PC-3 (cell line): ENCODE measurements at regions of chr1 and their contacts with region 1.

Region 1: GRCh38 chr1:215606564-215607168 is 39.6 kb downstream of the KCTD3 start:
- DNase-seq: peak; percentile 75
- ATAC-seq: peak; percentile 78
- H3K4me3 ChIP-seq: no peak overlapping the region
- H3K27ac ChIP-seq: no peak overlapping the region
- H3K4me1 ChIP-seq: no peaks in the 10 kb centered on the region
- H3K27me3 ChIP-seq: no peaks in the 10 kb centered on the region
- CTCF ChIP-seq: peak; percentile 95

Region 2: DNA sequence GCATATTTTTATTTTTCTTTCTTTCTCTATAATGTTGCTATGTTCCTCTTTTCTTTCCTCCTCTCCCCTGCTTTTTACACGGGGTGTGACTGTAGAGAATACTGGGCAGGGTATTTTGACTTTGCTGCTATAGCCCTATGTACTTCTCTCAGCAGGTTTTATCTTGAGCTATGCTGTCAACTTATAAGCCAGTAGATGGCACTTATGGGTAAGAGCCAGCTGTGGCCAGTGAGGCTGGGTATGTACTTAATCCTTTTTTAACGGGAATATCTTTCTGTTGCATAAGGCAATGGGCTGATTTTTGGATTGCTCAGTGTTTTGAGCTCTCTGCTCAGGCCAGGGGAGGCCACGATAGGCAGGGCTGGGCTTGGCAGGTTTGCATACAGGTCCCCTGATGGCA is 425.1 kb before region 1 on chr1:
- CTCF ChIA-PET with region 1: interaction called, 3 read pairs
- POLR2A ChIA-PET with region 1: no interaction called
- intact Hi-C with region 1: loop called (anchors 1 kb)
- DNase-seq: peak; percentile 80
- ATAC-seq: peak; percentile 99
- H3K4me3 ChIP-seq: no peak overlapping the region
- H3K27ac ChIP-seq: no peak overlapping the region
- H3K4me1 ChIP-seq: no peaks in the 10 kb centered on the region
- H3K27me3 ChIP-seq: no peaks in the 10 kb centered on the region
- CTCF ChIP-seq: peak; percentile 91

Region 3: GRCh38 chr1:215556996-215557395 is 49.7 kb before region 1 on chr1:
- CTCF ChIA-PET with region 1: no interaction called
- POLR2A ChIA-PET with region 1: no interaction called
- intact Hi-C with region 1: loop called (anchors 10 kb)
- DNase-seq: no peak
- ATAC-seq: no peak
- H3K4me3 ChIP-seq: no peak overlapping the region
- H3K27ac ChIP-seq: no peak overlapping the region
- H3K4me1 ChIP-seq: no peaks in the 10 kb centered on the region
- H3K27me3 ChIP-seq: no peaks in the 10 kb centered on the region
- CTCF ChIP-seq: no peak

Region 4: DNA sequence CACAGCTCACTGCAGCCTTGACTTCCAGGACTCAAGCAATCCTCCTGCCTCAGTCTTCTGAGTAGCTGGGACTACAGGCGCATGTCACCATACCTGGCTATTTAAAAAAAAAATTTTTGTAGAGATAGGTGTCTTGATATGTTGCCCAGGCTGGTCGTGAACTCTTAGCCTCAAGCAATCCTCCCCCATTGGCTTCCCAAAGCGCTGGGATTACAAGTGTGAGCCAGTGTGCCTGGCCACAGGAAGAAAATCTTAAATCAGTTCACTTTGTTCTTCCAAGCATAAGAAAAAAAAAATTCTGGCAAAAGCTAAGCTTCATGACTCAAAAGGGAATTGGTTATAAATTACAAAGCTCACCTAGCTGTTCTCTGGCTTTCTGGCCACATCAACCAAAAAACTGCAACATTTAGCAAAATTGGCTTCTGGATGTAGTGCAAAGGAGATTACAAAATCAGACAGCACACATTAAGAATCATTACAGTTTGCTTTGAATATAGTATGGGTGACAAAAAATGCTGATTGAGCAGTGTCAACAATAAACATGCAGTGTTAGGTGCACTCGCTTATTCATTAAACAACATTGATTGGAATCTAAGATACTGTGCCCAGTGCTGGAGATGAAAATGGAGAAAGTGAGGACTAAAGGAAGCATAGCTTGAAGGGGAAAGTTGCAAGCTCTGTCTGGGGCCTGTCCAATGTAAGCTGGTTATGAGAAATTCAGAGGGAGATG is 37.1 kb after region 1 on chr1:
- CTCF ChIA-PET with region 1: no interaction called
- POLR2A ChIA-PET with region 1: no interaction called
- intact Hi-C with region 1: no loop called
- DNase-seq: no peak
- ATAC-seq: no peak
- H3K4me3 ChIP-seq: no peak overlapping the region
- H3K27ac ChIP-seq: no peak overlapping the region
- H3K4me1 ChIP-seq: no peaks in the 10 kb centered on the region
- H3K27me3 ChIP-seq: peaks cover 9% of the 10 kb centered on the region; the same call in 1 of the 2 replicates
- CTCF ChIP-seq: no peak